ENCODE measurements at regions of chr1 and their contacts with region 1.

Region 1: DNA sequence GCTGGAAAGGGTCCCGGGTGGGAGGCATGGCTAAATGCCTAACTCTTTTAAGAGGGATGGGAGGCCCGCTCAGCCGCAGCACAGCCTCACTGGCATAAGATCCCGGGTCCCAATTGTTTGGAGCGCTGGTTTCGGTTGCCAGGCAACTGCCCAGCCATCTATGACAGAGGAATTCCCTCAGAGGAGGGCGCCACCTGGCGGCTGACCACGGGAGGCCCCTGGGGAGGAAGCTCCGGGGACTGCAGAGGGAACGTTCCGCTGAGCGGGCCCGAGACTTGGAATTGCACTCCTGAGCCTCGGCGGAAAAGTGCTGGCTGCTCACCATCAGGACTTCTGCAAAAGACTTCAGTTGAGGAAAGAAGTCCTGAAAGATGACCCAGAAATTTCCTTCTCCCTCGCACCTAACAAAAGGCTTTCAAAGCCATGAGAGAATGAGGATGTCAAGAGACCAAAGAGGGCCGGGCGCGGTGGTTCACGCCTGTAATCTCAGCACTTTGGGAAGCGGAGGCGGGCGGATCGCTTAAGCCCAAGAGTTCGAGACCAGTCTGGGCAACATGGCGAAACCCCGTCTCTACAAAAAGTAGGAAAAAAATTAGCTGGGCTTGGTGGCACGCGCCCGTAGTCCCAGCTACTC is 1.1 kb upstream of the ELAPOR1 start:
- DNase-seq: peak; percentile 87
- ATAC-seq: peak; percentile 86
- H3K4me3 ChIP-seq: peak overlapping the region; percentile 38; the same call in 1 of the 2 replicates
- H3K27ac ChIP-seq: no peak overlapping the region
- H3K4me1 ChIP-seq: peaks cover 8% of the 10 kb centered on the region; the same call in 1 of the 2 replicates
- H3K27me3 ChIP-seq: peaks cover 28% of the 10 kb centered on the region
- CTCF ChIP-seq: peak; percentile 91

Region 2: DNA sequence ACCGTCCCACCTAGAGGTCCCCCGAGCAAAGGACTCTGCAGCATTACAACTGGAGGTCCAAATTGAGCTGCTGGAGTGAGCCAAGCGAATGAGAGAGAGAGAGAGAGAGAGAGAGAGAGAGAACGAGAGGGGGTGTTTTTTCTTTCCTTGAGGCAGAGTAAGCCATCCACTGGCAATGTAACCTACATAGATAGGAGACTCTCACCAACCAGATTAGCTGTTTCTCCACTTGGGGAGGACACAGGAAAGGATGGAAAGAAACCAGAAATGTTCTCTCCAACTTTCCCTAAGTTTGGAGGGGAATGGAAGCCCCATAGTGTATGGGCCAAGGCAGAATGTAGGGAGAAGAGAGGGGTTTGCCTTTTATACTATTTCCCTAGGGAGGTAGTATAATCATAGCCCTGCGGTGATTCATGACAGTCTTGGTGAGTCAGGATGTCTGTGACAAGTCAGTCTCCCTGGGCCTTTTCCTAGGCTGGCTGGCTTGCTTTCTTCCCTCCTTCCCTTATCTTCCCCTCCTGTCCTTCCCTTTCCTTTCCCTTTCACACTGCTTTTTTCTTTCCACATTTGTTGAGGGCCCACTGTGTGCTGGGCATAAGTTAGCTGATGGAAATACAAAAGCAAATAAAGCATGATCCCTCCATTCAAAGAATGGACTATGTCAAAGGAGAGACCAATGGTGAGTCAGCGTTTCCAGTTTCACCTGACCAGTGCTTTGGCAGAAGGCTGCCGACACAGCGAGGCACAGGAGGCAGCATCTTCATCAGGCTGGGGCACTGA is 392.9 kb before region 1 on chr1:
- CTCF ChIA-PET with region 1: interaction called, 11 read pairs
- POLR2A ChIA-PET with region 1: no interaction called
- intact Hi-C with region 1: no loop called
- DNase-seq: peak; percentile 89
- ATAC-seq: peak; percentile 98
- H3K4me3 ChIP-seq: peak overlapping the region; percentile 37; the same call in 1 of the 2 replicates
- H3K27ac ChIP-seq: peak overlapping the region; percentile 84
- H3K4me1 ChIP-seq: peaks cover 22% of the 10 kb centered on the region
- H3K27me3 ChIP-seq: no peaks in the 10 kb centered on the region
- CTCF ChIP-seq: no peak

Region 3: DNA sequence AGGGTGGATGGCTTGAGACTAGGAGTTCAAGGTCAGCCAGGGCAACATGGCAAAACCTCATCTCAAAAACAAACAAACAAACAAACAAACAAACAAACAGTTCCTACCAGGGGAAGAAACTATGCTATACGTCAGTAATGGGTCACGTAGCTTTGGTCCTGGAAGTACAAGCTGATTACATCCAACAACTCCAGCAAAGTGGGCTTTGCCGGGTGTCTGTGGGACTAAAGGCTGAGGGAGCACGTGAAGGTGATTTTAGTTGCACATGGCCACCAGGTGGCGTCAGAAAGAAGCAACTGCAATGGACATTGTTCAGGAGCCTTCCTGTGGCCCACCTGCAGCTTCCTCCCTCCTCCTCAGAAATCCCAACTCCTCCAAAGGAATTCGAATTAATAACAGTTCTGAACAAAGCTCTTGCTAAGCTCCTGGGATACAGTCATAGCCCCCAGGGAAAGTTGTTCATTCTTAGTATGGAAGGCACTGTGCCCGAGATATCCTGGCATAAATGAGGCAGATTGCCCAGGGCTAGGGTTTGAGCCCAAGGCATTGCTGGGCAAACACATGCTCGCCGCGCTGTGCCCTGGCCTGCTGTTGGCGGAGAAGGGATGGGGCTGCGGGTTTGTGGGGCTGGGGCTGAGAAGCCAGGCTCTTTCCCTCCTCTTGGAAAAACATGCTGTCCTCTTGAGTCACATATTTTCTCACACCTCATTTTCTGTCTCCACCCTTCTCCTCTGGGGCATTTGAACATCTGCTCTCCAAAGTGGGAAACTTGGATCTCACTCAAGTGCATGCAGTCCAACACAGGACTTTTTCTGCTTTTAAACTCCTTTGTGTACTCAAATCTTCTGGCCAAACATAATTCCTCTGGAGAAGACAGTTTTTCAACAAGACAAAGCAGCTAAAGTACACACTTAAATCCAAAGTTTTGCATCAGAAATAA is 284.5 kb before region 1 on chr1:
- CTCF ChIA-PET with region 1: interaction called, 3 read pairs
- POLR2A ChIA-PET with region 1: no interaction called
- intact Hi-C with region 1: loop called (anchors 5 kb)
- DNase-seq: peak; percentile 89
- ATAC-seq: peak; percentile 35
- H3K4me3 ChIP-seq: no peak overlapping the region
- H3K27ac ChIP-seq: peak overlapping the region; percentile 93
- H3K4me1 ChIP-seq: peaks cover 42% of the 10 kb centered on the region
- H3K27me3 ChIP-seq: no peaks in the 10 kb centered on the region
- CTCF ChIP-seq: peak; percentile 89

Region 4: DNA sequence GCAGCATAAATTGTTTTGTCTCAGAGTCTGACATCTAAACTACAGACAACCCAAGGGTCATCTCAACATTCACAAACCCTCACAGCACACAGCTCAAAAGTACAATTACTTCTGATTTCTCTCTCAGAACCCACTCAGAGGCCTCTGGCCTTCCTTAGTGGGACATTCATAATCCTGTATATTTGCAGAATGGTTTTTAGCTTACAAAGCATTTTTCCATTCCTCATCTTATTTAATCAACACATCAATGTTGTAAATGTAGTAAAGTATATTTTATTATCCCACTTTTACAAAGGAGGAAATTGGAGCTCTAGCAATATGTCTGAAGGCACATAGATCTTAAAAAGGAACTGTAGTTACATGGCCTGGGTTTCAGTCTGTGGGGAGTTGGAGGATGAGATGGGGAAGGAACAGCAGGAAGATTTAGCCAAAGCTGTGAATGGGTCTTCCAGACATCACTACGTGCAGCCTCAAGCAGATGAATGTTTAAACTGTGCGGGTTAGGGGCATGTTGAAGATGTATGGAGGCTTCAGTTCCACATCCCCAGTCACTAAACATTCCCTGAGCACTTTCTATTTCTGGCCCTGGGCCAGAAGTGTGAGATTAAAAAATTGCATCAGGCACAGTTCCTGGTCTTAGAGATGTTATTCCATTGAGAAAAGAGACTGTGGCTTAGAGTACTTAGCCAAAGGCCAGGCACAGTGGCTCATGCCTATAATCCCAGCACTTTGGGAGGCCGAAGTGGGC is 269.2 kb before region 1 on chr1:
- CTCF ChIA-PET with region 1: interaction called, 14 read pairs
- POLR2A ChIA-PET with region 1: no interaction called
- intact Hi-C with region 1: no loop called
- DNase-seq: no peak
- ATAC-seq: no peak
- H3K4me3 ChIP-seq: no peak overlapping the region
- H3K27ac ChIP-seq: no peak overlapping the region
- H3K4me1 ChIP-seq: no peaks in the 10 kb centered on the region
- H3K27me3 ChIP-seq: no peaks in the 10 kb centered on the region
- CTCF ChIP-seq: no peak

Region 5: DNA sequence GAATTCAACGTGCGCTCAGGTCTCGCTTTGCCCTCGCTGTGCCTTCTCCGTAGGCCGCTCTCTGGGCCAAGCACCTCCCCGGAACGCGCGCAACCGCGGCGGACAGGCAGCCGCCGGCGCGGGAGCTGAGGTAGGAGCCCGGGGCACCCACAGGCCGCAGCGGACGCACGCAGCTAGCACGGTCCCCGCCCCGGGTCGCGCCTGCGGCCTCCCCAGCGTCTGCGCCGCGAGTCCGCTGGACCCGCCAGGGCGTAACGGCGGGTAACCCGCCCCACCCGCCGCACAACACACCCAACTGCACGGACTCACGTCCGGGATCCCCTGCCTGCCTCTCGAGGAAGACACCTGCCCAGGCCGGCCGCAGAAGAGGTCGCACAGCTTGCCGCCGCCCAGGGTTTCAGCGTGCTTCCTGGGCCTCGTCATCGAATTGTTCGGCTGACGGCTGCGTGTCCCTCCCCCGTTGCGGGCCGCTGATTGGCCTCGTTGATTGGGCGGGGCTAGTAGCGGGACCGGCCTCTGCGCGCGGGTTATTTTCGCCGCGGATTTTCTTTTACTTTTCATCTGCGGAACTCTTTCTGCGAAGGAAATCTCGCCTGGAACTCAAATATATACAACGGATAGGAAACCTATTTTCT is 149.6 kb before region 1 on chr1 and contains the start of gene CLCC1:
- CTCF ChIA-PET with region 1: no interaction called
- POLR2A ChIA-PET with region 1: interaction called, 3 read pairs
- intact Hi-C with region 1: loop called (anchors 2 kb)
- DNase-seq: peak; percentile 92
- ATAC-seq: peak; percentile 94
- H3K4me3 ChIP-seq: peak within 1 kb of the TSS; percentile 78
- H3K27ac ChIP-seq: peak within 1 kb of the TSS; percentile 77
- H3K4me1 ChIP-seq: peaks cover 6% of the 10 kb centered on the region; the same call in 1 of the 2 replicates
- H3K27me3 ChIP-seq: no peaks in the 10 kb centered on the region
- CTCF ChIP-seq: no peak
- total RNA-seq, gene CLCC1: 29.5 and 30.4 TPM in 2 replicates

Region 6: GRCh38 chr1:109090196-109091077 is 22.3 kb before region 1 on chr1 and contains the start of gene TMEM167B:
- CTCF ChIA-PET with region 1: interaction called, 5 read pairs
- POLR2A ChIA-PET with region 1: no interaction called
- intact Hi-C with region 1: loop called (anchors 1 kb)
- DNase-seq: peak; percentile 95
- ATAC-seq: peak; percentile 89
- H3K4me3 ChIP-seq: peak within 1 kb of the TSS; percentile 89
- H3K27ac ChIP-seq: peak within 1 kb of the TSS; percentile 80
- H3K4me1 ChIP-seq: peaks cover 17% of the 10 kb centered on the region
- H3K27me3 ChIP-seq: no peaks in the 10 kb centered on the region
- CTCF ChIP-seq: no peak
- total RNA-seq, gene TMEM167B: 21.0 and 27.7 TPM in 2 replicates

Region 7: GRCh38 chr1:109193653-109194590 is 81.2 kb after region 1 on chr1:
- CTCF ChIA-PET with region 1: interaction called, 4 read pairs
- POLR2A ChIA-PET with region 1: no interaction called
- intact Hi-C with region 1: loop called (anchors 1 kb)
- DNase-seq: peak; percentile 75
- ATAC-seq: no peak
- H3K4me3 ChIP-seq: no peak overlapping the region
- H3K27ac ChIP-seq: no peak overlapping the region
- H3K4me1 ChIP-seq: peaks cover 22% of the 10 kb centered on the region
- H3K27me3 ChIP-seq: no peaks in the 10 kb centered on the region
- CTCF ChIP-seq: peak; percentile 90

Region 8: GRCh38 chr1:109370712-109371455 is 258.1 kb after region 1 on chr1:
- CTCF ChIA-PET with region 1: no interaction called
- POLR2A ChIA-PET with region 1: no interaction called
- intact Hi-C with region 1: no loop called
- DNase-seq: peak; percentile 87
- ATAC-seq: peak; percentile 96
- H3K4me3 ChIP-seq: peak overlapping the region; percentile 9; the same call in 1 of the 2 replicates
- H3K27ac ChIP-seq: peak overlapping the region; percentile 53
- H3K4me1 ChIP-seq: peaks cover 26% of the 10 kb centered on the region
- H3K27me3 ChIP-seq: no peaks in the 10 kb centered on the region
- CTCF ChIP-seq: no peak

Measured in PC-3 (cell line).